Dendritic cell treated with granulocyte-macrophage colony-stimulating factor and Interleukin-4, amounts not matched to agents 40 ng/mL and 50 ng/mL, for 4 days (primary cell): ENCODE measurements at regions of chr1 and their contacts with region 1.

Region 1: DNA sequence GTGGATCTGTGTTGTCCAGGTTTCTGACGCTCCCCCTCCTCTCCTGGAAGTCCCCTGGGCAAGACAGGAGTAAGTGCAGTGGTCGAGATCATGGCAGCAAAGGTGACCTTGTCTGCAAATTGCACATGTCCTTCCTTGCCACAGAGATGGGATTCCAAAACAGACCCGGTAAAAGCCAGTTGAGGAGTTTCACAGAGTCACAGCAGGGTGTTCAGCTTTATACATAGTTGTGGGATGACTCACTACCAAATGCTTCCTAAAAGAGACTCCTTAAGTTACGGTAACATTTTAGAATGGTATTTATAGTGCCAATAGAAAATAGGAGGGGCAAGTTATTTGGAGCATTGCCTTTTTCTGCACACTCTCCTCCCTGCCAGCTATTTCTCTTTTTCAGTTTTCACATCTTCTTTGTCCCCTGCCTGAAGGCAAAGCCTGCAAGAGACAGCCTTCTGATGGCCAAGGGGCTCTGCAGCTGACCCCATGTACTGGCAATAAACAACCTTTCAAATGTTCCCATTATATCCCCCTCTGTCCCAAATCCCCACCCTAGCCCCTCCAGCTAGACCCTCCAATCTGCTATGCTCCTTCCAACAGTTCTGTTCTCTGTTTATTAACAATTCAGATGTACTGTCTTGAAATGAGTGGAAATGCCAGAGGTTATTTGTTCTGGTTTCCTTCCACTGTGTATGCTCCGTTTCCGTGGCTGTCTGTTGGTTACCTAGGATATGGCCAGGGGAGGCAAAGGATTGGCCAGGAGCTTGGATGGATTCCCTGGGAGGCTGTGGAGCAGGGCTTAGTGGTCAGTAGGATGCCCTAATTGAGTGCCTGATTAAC is 115.0 kb downstream of the TGFB2 start:
- H3K4me3 Mint-ChIP-seq: no peak overlapping the region
- H3K27ac Mint-ChIP-seq: peak overlapping the region; percentile 69
- H3K4me1 Mint-ChIP-seq: peaks cover 44% of the 10 kb centered on the region
- H3K27me3 Mint-ChIP-seq: no peaks in the 10 kb centered on the region

Region 2: DNA sequence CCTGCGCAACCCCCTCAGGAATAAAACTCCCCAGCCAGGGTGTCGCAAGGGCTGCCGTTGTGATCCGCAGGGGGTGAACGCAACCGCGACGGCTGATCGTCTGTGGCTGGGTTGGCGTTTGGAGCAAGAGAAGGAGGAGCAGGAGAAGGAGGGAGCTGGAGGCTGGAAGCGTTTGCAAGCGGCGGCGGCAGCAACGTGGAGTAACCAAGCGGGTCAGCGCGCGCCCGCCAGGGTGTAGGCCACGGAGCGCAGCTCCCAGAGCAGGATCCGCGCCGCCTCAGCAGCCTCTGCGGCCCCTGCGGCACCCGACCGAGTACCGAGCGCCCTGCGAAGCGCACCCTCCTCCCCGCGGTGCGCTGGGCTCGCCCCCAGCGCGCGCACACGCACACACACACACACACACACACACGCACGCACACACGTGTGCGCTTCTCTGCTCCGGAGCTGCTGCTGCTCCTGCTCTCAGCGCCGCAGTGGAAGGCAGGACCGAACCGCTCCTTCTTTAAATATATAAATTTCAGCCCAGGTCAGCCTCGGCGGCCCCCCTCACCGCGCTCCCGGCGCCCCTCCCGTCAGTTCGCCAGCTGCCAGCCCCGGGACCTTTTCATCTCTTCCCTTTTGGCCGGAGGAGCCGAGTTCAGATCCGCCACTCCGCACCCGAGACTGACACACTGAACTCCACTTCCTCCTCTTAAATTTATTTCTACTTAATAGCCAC is 114.3 kb before region 1 on chr1:
- intact Hi-C with region 1: loop called (anchors 5 kb)
- H3K4me3 Mint-ChIP-seq: no peak overlapping the region
- H3K27ac Mint-ChIP-seq: no peak overlapping the region
- H3K4me1 Mint-ChIP-seq: peaks cover 11% of the 10 kb centered on the region
- H3K27me3 Mint-ChIP-seq: peaks cover 15% of the 10 kb centered on the region

Region 3: GRCh38 chr1:218568962-218569550 is 109.0 kb after region 1 on chr1:
- intact Hi-C with region 1: no loop called
- H3K4me3 Mint-ChIP-seq: no peak overlapping the region
- H3K27ac Mint-ChIP-seq: no peak overlapping the region
- H3K4me1 Mint-ChIP-seq: no peaks in the 10 kb centered on the region
- H3K27me3 Mint-ChIP-seq: no peaks in the 10 kb centered on the region

Region 4: GRCh38 chr1:218656301-218657037 is 196.4 kb after region 1 on chr1:
- intact Hi-C with region 1: no loop called
- H3K4me3 Mint-ChIP-seq: no peak overlapping the region
- H3K27ac Mint-ChIP-seq: no peak overlapping the region
- H3K4me1 Mint-ChIP-seq: no peaks in the 10 kb centered on the region
- H3K27me3 Mint-ChIP-seq: no peaks in the 10 kb centered on the region

Region 5: DNA sequence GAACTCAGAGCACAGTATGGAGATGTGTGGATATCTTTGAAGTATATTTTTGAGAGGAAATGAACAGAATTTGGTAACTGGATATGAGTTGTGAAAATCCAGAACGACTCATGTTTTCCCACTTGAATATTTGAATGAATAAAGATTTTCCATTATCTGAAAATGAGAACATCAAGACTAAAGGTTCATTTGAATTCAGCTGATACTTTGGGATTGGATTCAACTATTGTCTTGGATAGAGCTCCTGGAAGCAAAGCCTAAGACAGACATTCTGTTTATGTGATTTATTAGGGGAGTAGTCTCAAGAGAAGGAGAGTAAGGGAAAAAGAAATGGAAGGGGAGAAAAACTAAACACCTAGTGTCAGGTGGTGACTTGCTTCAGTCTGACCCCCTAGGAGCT is 457.6 kb after region 1 on chr1:
- intact Hi-C with region 1: no loop called
- H3K4me3 Mint-ChIP-seq: no peak overlapping the region
- H3K27ac Mint-ChIP-seq: no peak overlapping the region
- H3K4me1 Mint-ChIP-seq: no peaks in the 10 kb centered on the region
- H3K27me3 Mint-ChIP-seq: no peaks in the 10 kb centered on the region

Region 6: DNA sequence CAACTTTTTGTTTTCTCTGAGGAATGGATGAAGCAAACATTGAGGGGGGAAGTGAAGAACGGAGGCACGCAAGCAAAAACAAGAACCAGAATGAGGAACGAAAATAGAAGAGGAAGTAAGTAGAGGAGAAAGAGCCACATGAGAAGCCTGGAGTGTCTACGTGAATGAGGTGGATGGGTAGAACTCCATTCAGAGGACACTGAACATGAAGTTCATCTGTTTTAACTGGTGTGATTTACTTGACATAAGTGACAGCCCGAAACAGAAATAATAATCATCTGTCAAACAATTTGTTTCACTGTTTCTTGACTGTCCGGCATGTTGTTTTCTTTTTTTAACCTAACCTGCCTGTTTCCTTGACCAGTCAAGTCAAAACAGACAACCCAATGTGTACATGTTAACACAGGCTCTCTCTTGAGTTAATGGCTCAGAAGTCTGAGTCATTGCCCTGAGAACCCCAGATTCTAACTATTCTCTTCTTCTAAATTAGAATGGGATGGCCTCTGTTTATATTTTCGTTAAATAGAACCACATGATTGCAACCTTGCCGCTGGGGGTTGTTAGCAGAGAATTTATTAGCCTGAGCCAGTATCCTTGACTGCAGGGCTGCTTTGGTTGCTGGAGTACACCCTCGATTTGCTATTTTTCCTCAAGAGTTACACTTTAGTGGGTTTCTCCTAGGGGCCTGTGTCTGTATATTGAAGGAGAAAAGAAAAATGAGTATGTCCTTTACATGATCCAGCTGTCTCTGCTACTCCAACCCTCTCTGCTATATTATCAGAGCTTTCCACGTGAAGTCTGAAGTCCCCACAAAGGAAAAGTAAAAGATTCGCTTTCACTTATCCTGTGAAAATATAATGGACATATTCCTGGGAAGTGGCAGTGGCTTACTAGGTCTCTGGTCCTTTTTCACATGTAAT is 1001.1 kb after region 1 on chr1:
- intact Hi-C with region 1: loop called (anchors 10 kb)
- H3K4me3 Mint-ChIP-seq: no peak overlapping the region
- H3K27ac Mint-ChIP-seq: peak overlapping the region; percentile 93
- H3K4me1 Mint-ChIP-seq: peaks cover 55% of the 10 kb centered on the region
- H3K27me3 Mint-ChIP-seq: no peaks in the 10 kb centered on the region